Activated T-helper 1 cell treated with anti-CD3 and anti-CD28 coated beads, Interleukin-12 subunit alpha, Interleukin-12 subunit beta, Interleukin-2, Interleukin-4 antibody, amounts not matched to agents 30 ng/mL and 10 ng/mL and 1 ng/mL, durations not matched to agents 14 hours and 24 hours and 36 hours (primary cell): ENCODE measurements at regions of chr21 and their contacts with region 1.

Region 1: DNA sequence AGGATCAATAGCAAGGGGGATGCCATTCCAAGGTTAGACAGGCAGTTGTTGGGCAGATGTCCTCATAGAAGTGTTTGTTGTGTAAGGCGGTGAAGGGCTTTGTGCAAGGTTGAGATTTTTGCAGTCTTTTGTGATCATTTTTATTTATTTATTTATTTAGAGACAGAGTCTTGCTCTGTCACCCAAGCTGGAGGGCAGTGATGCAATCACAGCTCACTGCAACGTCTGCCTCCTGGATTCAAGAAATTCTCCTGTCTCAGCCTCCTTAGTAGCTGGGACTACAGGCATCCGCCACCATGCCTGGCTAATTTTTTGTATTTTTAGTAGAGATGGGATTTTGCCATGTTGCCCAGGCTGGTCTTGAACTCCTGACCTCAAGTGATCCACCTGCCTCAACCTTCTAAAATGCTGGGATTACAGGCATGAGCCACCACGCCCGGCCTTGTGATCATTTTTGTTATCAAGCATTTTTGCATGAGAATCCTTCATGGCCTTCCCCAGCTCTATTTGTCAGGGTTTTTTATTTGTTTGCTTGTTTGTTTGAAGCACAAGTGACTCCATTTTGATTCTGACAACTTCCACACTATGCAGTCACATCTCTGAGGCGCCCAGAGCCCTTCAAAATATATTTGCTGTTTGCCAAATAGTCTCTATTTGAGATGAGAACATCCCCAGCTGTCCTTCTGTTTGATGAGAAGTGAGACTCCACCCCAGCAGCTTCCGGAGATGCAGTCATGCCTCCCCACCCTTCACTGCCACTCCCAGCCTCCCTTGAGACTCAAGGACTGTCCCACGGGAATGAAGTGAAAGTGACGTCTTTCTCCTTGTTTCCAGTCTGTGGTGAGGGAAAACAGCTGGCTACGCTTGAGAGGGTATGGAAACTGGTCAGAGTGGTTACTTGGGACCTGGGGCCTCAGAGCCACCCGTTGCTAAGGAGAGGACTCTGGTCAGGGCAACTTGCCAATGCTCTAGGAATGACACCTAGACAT is 38.0 kb downstream of the TMEM50B start:
- DNase-seq: no peak
- H3K4me3 Mint-ChIP-seq: no peak overlapping the region
- H3K27ac Mint-ChIP-seq: no peak overlapping the region
- H3K4me1 Mint-ChIP-seq: peaks cover 3% of the 10 kb centered on the region
- H3K27me3 Mint-ChIP-seq: peaks cover 2% of the 10 kb centered on the region

Region 2: GRCh38 chr21:33266050-33266788 is 175.6 kb before region 1 on chr21 and contains the start of gene IL10RB:
- intact Hi-C with region 1: loop called (anchors 2 kb)
- DNase-seq: peak; percentile 66
- H3K4me3 Mint-ChIP-seq: peak within 1 kb of the TSS; percentile 97
- H3K27ac Mint-ChIP-seq: peak within 1 kb of the TSS; percentile 92
- H3K4me1 Mint-ChIP-seq: peaks cover 33% of the 10 kb centered on the region
- H3K27me3 Mint-ChIP-seq: no peaks in the 10 kb centered on the region
- total RNA-seq, gene IL10RB: 20.5 and 21.4 TPM in 2 replicates

Region 3: GRCh38 chr21:33360881-33361602 is 80.7 kb before region 1 on chr21:
- intact Hi-C with region 1: loop called (anchors 1 kb)
- DNase-seq: peak; percentile 72
- H3K4me3 Mint-ChIP-seq: peak overlapping the region; percentile 83
- H3K27ac Mint-ChIP-seq: peak overlapping the region; percentile 64
- H3K4me1 Mint-ChIP-seq: peaks cover 21% of the 10 kb centered on the region
- H3K27me3 Mint-ChIP-seq: no peaks in the 10 kb centered on the region

Region 4: GRCh38 chr21:33374450-33375096 is 67.2 kb before region 1 on chr21:
- intact Hi-C with region 1: loop called (anchors 1 kb)
- DNase-seq: peak; percentile 22
- H3K4me3 Mint-ChIP-seq: no peak overlapping the region
- H3K27ac Mint-ChIP-seq: no peak overlapping the region
- H3K4me1 Mint-ChIP-seq: peaks cover 5% of the 10 kb centered on the region
- H3K27me3 Mint-ChIP-seq: peaks cover 37% of the 10 kb centered on the region

Region 5: GRCh38 chr21:33428669-33429068 is 13.1 kb before region 1 on chr21:
- intact Hi-C with region 1: no loop called
- DNase-seq: no peak
- H3K4me3 Mint-ChIP-seq: no peak overlapping the region
- H3K27ac Mint-ChIP-seq: no peak overlapping the region
- H3K4me1 Mint-ChIP-seq: peaks cover 15% of the 10 kb centered on the region
- H3K27me3 Mint-ChIP-seq: peaks cover 9% of the 10 kb centered on the region